PC-9 (cell line): ENCODE measurements at regions of chr3 and their contacts with region 1.

Region 1: DNA sequence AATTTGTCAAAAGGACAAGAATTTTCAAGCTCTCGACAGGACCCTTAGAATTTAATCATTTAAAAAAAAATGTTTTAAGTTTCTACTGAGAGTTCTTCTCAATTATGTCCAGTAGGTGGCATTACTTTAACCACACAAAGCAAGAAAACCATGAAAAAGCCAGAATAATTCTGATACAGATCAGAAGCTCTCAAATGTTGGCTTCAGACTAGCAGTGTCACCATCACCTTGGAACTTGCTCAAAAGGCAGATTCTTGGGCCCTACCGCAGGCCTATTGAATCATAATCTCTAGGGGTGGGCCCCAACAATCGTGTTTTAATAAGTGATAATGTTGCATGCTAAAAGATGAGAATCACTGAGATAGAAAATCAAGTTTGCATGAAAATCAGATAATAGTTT is 99.5 kb upstream of the KCNMB2 start:
- DNase-seq: no peak
- H3K4me3 ChIP-seq: no peak overlapping the region
- H3K27ac ChIP-seq: no peak overlapping the region
- H3K4me1 ChIP-seq: peaks cover 9% of the 10 kb centered on the region; the same call in 1 of the 2 replicates
- H3K27me3 ChIP-seq: no peaks in the 10 kb centered on the region
- CTCF ChIP-seq: peak; percentile 89

Region 2: DNA sequence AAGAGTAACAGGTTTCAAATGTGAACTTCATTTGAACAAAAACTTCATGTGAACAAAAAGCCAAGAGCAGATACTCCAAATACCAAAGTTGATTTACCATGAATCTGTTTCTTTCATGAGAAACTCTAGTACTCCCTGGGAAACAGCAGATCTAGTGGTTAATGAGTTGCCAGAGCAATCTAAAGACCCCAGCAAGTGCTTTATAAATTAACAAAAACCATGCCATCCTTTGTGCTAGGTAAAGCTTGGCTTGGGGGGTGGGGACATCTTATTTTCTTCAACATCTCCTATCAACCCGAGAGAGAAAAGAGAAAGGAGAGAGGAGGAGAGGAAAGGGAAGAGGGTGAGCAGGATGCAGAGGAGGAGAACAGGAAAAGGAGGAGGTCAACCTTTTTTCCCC is 1340.2 kb before region 1 on chr3:
- CTCF ChIA-PET with region 1: no interaction called
- POLR2A ChIA-PET with region 1: interaction called, 14 read pairs
- intact Hi-C with region 1: no loop called
- DNase-seq: no peak
- H3K4me3 ChIP-seq: no peak overlapping the region
- H3K27ac ChIP-seq: peak overlapping the region; percentile 17
- H3K4me1 ChIP-seq: no peaks in the 10 kb centered on the region
- H3K27me3 ChIP-seq: no peaks in the 10 kb centered on the region
- CTCF ChIP-seq: no peak

Region 3: GRCh38 chr3:178170698-178171535 is 265.9 kb before region 1 on chr3:
- CTCF ChIA-PET with region 1: no interaction called
- POLR2A ChIA-PET with region 1: no interaction called
- intact Hi-C with region 1: no loop called
- DNase-seq: peak; percentile 22 to 95
- H3K4me3 ChIP-seq: no peak overlapping the region
- H3K27ac ChIP-seq: peak overlapping the region; percentile 51
- H3K4me1 ChIP-seq: peaks cover 20% of the 10 kb centered on the region
- H3K27me3 ChIP-seq: no peaks in the 10 kb centered on the region
- CTCF ChIP-seq: no peak

Region 4: GRCh38 chr3:178392511-178392926 is 44.3 kb before region 1 on chr3:
- CTCF ChIA-PET with region 1: no interaction called
- POLR2A ChIA-PET with region 1: no interaction called
- intact Hi-C with region 1: no loop called
- DNase-seq: no peak
- H3K4me3 ChIP-seq: no peak overlapping the region
- H3K27ac ChIP-seq: no peak overlapping the region
- H3K4me1 ChIP-seq: no peaks in the 10 kb centered on the region
- H3K27me3 ChIP-seq: no peaks in the 10 kb centered on the region
- CTCF ChIP-seq: no peak

Region 5: DNA sequence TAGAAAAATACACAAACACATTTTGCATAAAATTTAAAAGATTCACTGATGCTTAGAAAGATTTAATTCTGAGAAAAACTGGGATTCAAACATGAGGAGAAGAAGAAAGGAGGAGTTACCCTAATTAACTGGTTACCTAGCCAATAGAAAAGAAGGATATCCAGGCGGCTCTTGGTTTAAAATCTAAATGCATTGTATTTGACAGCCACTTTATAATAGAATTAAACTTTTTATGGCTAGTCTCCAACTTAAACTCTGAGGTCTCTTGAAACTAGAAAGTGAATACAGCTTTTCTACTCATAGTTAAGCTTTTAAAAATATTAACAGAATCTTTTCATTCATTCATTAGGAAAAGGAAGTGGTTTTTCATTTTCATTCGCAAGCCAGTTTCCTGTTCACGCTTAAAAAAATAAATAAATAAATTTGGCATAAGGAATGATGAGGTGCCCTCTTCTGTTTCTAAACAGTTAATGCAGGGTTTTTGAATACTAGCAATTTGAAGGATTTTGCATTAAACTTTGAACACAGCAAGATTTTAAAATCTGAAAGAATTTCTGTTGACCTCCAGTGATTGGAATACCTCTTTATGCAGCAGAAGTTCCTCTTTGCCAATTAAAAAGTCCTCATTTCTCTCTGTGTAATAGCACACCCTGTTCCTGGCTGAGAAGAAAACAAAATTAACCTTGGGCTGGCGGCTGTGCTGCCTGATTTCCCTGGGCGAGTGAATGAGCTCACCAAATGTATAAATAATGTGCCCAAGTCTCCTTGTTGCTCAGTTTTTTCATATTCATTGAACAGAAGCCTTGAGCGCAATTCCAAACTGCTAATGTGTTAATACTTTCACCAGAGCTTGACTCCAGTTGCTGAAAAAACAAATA is 529.8 kb after region 1 on chr3:
- CTCF ChIA-PET with region 1: no interaction called
- POLR2A ChIA-PET with region 1: no interaction called
- intact Hi-C with region 1: loop called (anchors 1 kb)
- DNase-seq: peak in 1 of 2 experiments; percentile 47
- H3K4me3 ChIP-seq: 0 out of 2 replicates have a peak overlapping the region, but pooled peaks have one; percentile 8
- H3K27ac ChIP-seq: no peak overlapping the region
- H3K4me1 ChIP-seq: peaks cover 10% of the 10 kb centered on the region; the same call in 1 of the 2 replicates
- H3K27me3 ChIP-seq: no peaks in the 10 kb centered on the region
- CTCF ChIP-seq: peak; percentile 82

Region 6: DNA sequence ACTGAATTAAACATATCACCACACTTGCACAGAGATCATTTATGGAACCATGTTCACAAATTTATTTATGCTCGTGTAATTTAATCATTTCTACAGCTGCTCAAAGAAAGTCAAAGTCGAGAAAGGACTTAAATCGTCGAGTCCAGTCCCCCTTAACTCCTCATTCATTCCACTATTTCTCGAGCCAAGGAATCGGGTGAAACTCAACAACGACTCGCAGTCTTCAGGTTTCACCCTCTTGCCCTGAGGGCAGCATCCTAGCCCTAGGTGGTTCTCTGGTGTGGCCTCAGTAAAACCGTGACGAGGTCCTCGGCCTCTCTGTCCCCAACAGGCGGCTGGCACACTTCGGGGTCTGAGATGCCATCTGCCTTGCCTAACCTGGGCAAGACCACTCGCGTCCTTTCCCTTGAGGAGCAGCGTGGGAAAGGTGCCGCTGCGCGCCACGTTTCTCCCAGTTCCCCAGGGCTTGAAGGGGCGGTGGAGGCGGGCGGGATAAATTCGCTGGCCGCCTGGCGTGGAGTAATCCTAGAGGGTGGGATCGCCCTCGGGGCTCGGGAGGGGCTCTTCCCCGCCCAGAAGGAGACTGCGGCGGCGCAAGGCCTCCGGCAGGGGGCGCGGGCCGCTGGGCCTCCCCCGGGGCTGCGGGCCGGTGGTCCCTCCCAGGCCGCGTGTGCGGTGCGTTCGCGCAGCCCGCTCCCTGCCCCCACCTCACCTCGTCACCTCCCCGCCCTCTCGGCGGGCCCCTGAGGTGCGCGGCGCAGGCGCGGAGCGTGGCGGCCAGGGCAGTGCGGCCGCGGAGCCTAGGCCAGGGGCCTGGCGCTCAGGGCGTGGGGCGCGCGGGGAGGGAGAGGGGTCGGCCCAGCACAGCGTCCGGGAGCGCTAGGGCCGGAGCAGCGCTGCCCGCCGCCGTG is 885.8 kb after region 1 on chr3 and contains the start of gene ZNF639:
- CTCF ChIA-PET with region 1: no interaction called
- POLR2A ChIA-PET with region 1: no interaction called
- intact Hi-C with region 1: loop called (anchors 2 kb)
- DNase-seq: peak; percentile 72 to 91
- H3K4me3 ChIP-seq: peak within 1 kb of the TSS; percentile 80
- H3K27ac ChIP-seq: peak within 1 kb of the TSS; percentile 60
- H3K4me1 ChIP-seq: peaks cover 25% of the 10 kb centered on the region
- H3K27me3 ChIP-seq: no peaks in the 10 kb centered on the region
- CTCF ChIP-seq: peak; percentile 80
- total RNA-seq, gene ZNF639: 39.3 and 40.3 TPM in 2 replicates